MCF 10A (cell line): ENCODE measurements at regions of chr2 and their contacts with region 1.

Region 1: GRCh38 chr2:227324995-227325838 is at the start of gene MFF:
- DNase-seq: peak; percentile 93
- H3K4me3 Mint-ChIP-seq: peak within 1 kb of the TSS; percentile 89
- H3K27ac Mint-ChIP-seq: peak within 1 kb of the TSS; percentile 92
- H3K4me1 Mint-ChIP-seq: peaks cover 5% of the 10 kb centered on the region
- H3K27me3 Mint-ChIP-seq: no peaks in the 10 kb centered on the region
- CTCF ChIP-seq: peak; percentile 34
- total RNA-seq, gene MFF: 81.2 and 90.2 TPM in 2 replicates

Region 2: DNA sequence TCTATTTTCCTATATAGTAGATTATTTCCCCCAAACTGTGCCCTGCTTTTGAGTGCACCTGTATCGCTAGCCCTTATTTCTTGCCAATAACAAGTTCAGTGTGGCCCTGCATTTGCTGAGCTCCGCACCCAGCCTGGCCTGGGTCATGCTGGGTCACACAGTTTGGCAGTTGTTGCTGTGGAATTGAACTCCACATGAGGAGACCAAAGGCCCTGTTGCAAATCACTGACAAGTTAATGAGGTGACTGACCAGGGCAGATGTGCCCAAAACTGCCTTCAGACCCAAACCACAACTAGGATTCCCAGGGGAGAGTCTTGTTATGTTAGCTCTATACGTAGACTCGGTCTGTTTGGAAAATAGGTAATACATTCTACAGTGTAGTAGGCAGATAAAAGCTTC is 192.2 kb before region 1 on chr2:
- CTCF ChIA-PET with region 1: interaction called, 4 read pairs
- POLR2A ChIA-PET with region 1: no interaction called
- intact Hi-C with region 1: loop called (anchors 2 kb)
- DNase-seq: no peak
- H3K4me3 Mint-ChIP-seq: no peak overlapping the region
- H3K27ac Mint-ChIP-seq: no peak overlapping the region
- H3K4me1 Mint-ChIP-seq: peaks cover 5% of the 10 kb centered on the region
- H3K27me3 Mint-ChIP-seq: peaks cover 14% of the 10 kb centered on the region
- CTCF ChIP-seq: no peak

Region 3: DNA sequence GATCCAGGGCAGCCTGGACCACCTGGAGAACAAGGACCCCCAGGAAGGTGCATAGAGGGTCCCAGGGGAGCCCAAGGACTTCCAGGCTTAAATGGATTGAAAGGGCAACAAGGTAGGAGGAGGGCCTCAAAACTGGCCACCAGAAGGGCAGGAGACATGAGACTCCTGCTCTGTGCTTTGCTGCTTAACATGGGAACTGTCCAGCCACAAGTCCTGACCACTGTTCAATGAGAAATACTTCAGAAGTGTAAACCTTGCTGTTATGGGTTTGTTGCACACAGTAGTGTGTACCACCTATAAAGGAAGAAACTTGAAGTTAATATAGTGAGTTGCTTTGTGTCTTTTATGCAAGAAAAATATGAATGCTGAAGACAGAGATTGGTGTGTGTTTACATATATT is 44.3 kb before region 1 on chr2:
- CTCF ChIA-PET with region 1: no interaction called
- POLR2A ChIA-PET with region 1: no interaction called
- intact Hi-C with region 1: no loop called
- DNase-seq: no peak
- H3K4me3 Mint-ChIP-seq: no peak overlapping the region
- H3K27ac Mint-ChIP-seq: no peak overlapping the region
- H3K4me1 Mint-ChIP-seq: no peaks in the 10 kb centered on the region
- H3K27me3 Mint-ChIP-seq: no peaks in the 10 kb centered on the region
- CTCF ChIP-seq: no peak

Region 4: DNA sequence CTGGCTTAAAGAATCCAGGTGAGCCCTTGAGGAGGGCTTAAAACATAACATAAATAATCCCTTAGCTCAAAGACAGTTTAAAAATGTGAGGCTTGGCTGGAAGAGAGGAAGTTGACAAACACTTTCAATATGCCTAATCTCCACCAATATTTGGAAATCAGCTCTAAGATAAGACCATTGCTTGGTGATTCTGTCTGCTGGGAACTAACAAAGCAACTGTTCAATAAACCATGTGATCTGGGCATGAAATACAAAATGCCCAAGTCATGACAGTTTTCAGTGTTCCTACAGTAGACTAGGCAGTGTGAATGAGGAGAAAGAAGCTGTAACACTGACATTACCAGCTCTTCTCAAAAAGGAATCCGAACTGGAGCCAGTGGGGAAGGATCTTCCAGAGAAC is 10.5 kb after region 1 on chr2:
- CTCF ChIA-PET with region 1: interaction called, 3 read pairs
- POLR2A ChIA-PET with region 1: interaction called, 15 read pairs
- intact Hi-C with region 1: no loop called
- DNase-seq: no peak
- H3K4me3 Mint-ChIP-seq: no peak overlapping the region
- H3K27ac Mint-ChIP-seq: no peak overlapping the region
- H3K4me1 Mint-ChIP-seq: no peaks in the 10 kb centered on the region
- H3K27me3 Mint-ChIP-seq: no peaks in the 10 kb centered on the region
- CTCF ChIP-seq: no peak

Region 5: DNA sequence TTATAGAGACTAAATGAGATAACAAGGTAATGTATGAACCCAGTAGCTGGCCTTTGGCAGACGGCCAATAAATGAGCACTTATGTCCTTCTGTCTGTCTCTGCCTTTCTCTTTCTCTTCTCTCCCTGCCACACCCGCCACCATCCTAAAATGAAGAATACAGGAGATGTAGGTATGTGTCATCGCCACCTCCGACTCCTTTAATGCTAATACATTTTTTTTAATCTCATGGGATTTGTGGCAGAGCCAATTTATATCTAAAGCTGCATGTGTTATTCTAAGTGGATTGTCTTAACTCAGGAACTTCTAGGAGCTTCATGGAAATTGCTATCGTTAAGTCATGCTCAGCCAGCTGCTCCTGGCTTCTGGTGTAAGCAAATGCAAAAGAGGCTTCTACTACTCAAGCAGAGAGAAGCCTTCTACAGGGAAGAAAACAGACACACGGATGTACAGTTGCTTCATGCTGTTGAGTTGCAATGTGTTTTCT is 51.7 kb after region 1 on chr2:
- CTCF ChIA-PET with region 1: interaction called, 3 read pairs
- POLR2A ChIA-PET with region 1: interaction called, 5 read pairs
- intact Hi-C with region 1: loop called (anchors 2 kb)
- DNase-seq: peak; percentile 47
- H3K4me3 Mint-ChIP-seq: no peak overlapping the region
- H3K27ac Mint-ChIP-seq: peak overlapping the region; percentile 86
- H3K4me1 Mint-ChIP-seq: peaks cover 23% of the 10 kb centered on the region
- H3K27me3 Mint-ChIP-seq: no peaks in the 10 kb centered on the region
- CTCF ChIP-seq: no peak